ENCODE measurements at regions of chr2 and their contacts with region 1.

Region 1: DNA sequence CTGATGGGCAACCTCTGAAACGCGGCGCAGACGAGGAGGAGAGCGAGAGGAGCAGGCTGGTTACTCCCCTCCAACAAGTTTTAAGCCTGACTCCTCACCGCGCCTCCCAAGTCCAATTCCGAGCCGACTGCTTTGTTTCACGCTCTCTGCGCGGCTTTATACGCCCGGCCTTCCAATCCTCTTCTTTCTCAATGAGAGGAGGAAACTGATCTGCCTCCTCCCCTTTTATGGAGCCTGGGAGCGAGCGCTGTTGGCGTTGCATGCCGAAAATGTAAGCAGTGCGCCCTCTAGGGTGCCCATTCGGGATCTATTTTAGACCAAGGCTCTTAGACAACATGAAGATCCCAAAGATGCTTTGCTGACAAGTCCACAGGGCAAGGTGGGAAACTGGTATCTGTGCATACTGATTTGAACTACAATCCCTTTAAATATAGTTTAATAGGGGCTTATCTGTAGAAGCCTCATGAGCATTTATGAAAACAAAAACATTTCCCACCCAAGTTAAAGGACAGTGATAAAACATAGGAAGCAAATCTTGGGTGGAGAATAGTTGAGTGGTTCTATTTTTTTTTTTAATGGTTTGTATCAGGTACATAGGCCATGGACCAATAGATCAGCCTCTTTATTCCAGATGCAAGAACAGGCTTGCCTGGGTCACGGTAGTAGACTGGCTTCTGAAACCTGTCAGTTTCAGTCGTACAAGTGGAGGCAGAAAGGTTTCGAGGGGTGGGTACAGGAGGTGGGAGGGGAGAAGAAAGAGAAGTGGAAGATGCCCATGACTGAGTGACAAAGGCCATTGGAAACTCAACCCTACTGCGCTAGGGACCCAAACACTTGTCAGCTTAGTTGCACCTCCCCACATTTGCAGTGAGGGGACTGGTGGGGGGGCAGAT is at the start of gene RND3:
- DNase-seq: peak; percentile 98
- H3K4me3 ChIP-seq: peak within 1 kb of the TSS; percentile 85 to 96 (median 93)
- H3K27ac ChIP-seq: peak within 1 kb of the TSS; percentile 99
- H3K4me1 ChIP-seq: peaks cover 14% of the 10 kb centered on the region
- H3K27me3 ChIP-seq: no peaks in the 10 kb centered on the region
- CTCF ChIP-seq: peak; percentile 86 to 90
- total RNA-seq, gene RND3: 146 to 178 TPM

Region 2: DNA sequence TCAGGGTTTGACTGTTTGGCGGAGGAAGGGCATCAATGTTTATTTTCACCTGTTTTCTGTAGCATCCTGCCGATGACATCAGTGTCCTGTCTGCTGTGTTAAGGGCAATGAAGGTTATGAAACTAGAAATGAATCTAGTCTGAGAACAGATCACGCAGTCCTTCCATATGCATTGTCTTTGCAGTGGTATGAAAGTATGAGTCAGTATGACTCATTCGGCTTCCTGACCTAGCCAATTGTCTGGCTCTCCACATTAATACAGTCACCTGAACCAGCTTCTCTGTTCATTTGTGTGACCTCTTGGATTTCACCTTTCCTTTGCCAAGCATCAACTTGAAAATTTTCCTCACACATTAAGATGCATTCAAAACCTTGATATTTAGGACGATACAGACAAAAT is 354.2 kb before region 1 on chr2:
- CTCF ChIA-PET with region 1: no interaction called
- dilution Hi-C with region 1: no loop called
- in situ Hi-C with region 1: loop called in 1 of 2 experiments (anchors 25 kb)
- intact Hi-C with region 1: no loop called
- DNase-seq: peak; percentile 98
- H3K4me3 ChIP-seq: no peak overlapping the region
- H3K27ac ChIP-seq: peak overlapping the region; percentile 84
- H3K4me1 ChIP-seq: peaks cover 24% of the 10 kb centered on the region
- H3K27me3 ChIP-seq: no peaks in the 10 kb centered on the region
- CTCF ChIP-seq: no peak

Region 3: GRCh38 chr2:150517951-150518680 is 30.3 kb after region 1 on chr2:
- CTCF ChIA-PET with region 1: no interaction called
- dilution Hi-C with region 1: no loop called
- in situ Hi-C with region 1: no loop called
- intact Hi-C with region 1: loop called (anchors 2 kb)
- DNase-seq: peak; percentile 41
- H3K4me3 ChIP-seq: no peak overlapping the region
- H3K27ac ChIP-seq: no peak overlapping the region
- H3K4me1 ChIP-seq: peaks cover 23% of the 10 kb centered on the region
- H3K27me3 ChIP-seq: no peaks in the 10 kb centered on the region
- CTCF ChIP-seq: no peak

Region 4: GRCh38 chr2:150548527-150548926 is 60.7 kb after region 1 on chr2:
- CTCF ChIA-PET with region 1: no interaction called
- dilution Hi-C with region 1: no loop called
- in situ Hi-C with region 1: no loop called
- intact Hi-C with region 1: no loop called
- DNase-seq: no peak
- H3K4me3 ChIP-seq: no peak overlapping the region
- H3K27ac ChIP-seq: no peak overlapping the region
- H3K4me1 ChIP-seq: peaks cover 15% of the 10 kb centered on the region
- H3K27me3 ChIP-seq: no peaks in the 10 kb centered on the region
- CTCF ChIP-seq: peak; percentile 53 to 55

Region 5: DNA sequence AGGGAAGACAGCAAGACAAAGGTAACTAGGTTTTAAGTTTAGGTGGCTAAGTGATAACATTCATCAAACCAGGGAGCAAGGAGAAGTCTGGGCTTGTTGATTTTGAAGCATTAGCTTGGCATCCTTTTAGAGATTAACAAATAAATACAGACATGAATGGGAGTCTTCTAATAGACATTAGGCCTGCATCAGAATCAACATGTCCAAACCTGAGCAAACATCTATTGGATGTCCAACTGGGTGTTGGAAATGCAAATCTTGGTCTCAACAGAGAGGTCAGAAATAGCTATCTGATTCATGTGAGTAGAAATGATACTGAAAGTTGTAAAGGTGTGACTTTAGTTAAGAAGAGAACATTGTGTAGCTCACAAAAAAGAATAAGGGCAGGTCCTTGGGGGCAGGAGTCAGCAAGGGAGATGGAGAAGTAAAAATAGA is 85.2 kb after region 1 on chr2:
- CTCF ChIA-PET with region 1: no interaction called
- dilution Hi-C with region 1: no loop called
- in situ Hi-C with region 1: no loop called
- intact Hi-C with region 1: loop called (anchors 2 kb)
- DNase-seq: peak; percentile 92
- H3K4me3 ChIP-seq: no peak overlapping the region
- H3K27ac ChIP-seq: peak overlapping the region; percentile 78
- H3K4me1 ChIP-seq: peaks cover 35% of the 10 kb centered on the region
- H3K27me3 ChIP-seq: no peaks in the 10 kb centered on the region
- CTCF ChIP-seq: no peak

Region 6: GRCh38 chr2:150911766-150912280 is 424.0 kb after region 1 on chr2:
- CTCF ChIA-PET with region 1: no interaction called
- dilution Hi-C with region 1: no loop called
- in situ Hi-C with region 1: no loop called
- intact Hi-C with region 1: loop called (anchors 1 kb)
- DNase-seq: peak; percentile 70
- H3K4me3 ChIP-seq: no peak overlapping the region
- H3K27ac ChIP-seq: peak overlapping the region; percentile 30
- H3K4me1 ChIP-seq: peaks cover 19% of the 10 kb centered on the region
- H3K27me3 ChIP-seq: no peaks in the 10 kb centered on the region
- CTCF ChIP-seq: peak in 1 of 2 donors; percentile 36

Region 7: DNA sequence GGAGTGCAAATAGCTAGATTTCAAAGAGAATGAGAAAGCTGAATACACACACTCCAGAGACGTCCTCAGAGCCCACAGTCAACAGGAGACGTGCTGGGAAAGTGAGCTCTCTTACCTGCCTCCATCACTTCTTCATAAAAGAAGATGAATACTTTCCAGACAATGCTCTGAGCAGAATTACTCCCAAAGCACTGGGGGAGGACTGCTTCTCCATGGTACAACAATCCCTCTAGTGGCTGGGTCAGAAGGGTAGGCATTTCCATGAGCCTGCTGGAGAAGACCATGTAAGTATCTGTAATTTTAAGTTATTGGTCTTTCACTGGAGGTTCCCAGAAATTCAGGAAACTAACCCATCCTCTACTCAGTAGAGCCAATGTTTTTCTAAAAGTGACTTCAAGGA is 583.6 kb after region 1 on chr2:
- CTCF ChIA-PET with region 1: no interaction called
- dilution Hi-C with region 1: no loop called
- in situ Hi-C with region 1: loop called in 1 of 2 experiments (anchors 25 kb)
- intact Hi-C with region 1: loop called (anchors 5 kb)
- DNase-seq: peak; percentile 44
- H3K4me3 ChIP-seq: no peak overlapping the region
- H3K27ac ChIP-seq: no peak overlapping the region
- H3K4me1 ChIP-seq: no peaks in the 10 kb centered on the region
- H3K27me3 ChIP-seq: no peaks in the 10 kb centered on the region
- CTCF ChIP-seq: peak; percentile 42 to 69